SK-N-SH (cell line): ENCODE measurements at regions of chr4 and their contacts with region 1.

Region 1: GRCh38 chr4:1512738-1513660 is 106.8 kb upstream of the NKX1-1 start:
- DNase-seq: peak; percentile 87
- H3K4me3 ChIP-seq: no peak overlapping the region; a peak in 1 of 4 replicates
- H3K27ac ChIP-seq: no peak overlapping the region
- H3K4me1 ChIP-seq: no peaks in the 10 kb centered on the region
- H3K27me3 ChIP-seq: peaks cover 47% of the 10 kb centered on the region
- CTCF ChIP-seq: peak; percentile 56
- EP300 ChIP-seq: no peak
- RAD21 ChIP-seq: peak; percentile 37; the same call in 1 of the 2 replicates

Region 2: GRCh38 chr4:1351854-1352633 is 161.0 kb before region 1 on chr4:
- CTCF ChIA-PET with region 1: interaction called, 44 read pairs
- POLR2A ChIA-PET with region 1: no interaction called
- DNase-seq: peak; percentile 91
- H3K4me3 ChIP-seq: peak overlapping the region in 1 of 2 experiments; percentile 17; a peak in 1 of 4 replicates
- H3K27ac ChIP-seq: no peak overlapping the region
- H3K4me1 ChIP-seq: peaks cover 0 to 14% of the 10 kb centered on the region in 2 experiments; a peak in 1 of 4 replicates
- H3K27me3 ChIP-seq: no peaks in the 10 kb centered on the region
- CTCF ChIP-seq: peak; percentile 91
- EP300 ChIP-seq: no peak
- RAD21 ChIP-seq: peak; percentile 70

Region 3: GRCh38 chr4:1402516-1403091 is 110.4 kb before region 1 on chr4:
- CTCF ChIA-PET with region 1: interaction called, 11 read pairs
- POLR2A ChIA-PET with region 1: no interaction called
- DNase-seq: peak; percentile 52
- H3K4me3 ChIP-seq: no peak overlapping the region
- H3K27ac ChIP-seq: no peak overlapping the region
- H3K4me1 ChIP-seq: no peaks in the 10 kb centered on the region
- H3K27me3 ChIP-seq: peaks cover 50% of the 10 kb centered on the region
- CTCF ChIP-seq: no peak
- EP300 ChIP-seq: no peak
- RAD21 ChIP-seq: no peak

Region 4: DNA sequence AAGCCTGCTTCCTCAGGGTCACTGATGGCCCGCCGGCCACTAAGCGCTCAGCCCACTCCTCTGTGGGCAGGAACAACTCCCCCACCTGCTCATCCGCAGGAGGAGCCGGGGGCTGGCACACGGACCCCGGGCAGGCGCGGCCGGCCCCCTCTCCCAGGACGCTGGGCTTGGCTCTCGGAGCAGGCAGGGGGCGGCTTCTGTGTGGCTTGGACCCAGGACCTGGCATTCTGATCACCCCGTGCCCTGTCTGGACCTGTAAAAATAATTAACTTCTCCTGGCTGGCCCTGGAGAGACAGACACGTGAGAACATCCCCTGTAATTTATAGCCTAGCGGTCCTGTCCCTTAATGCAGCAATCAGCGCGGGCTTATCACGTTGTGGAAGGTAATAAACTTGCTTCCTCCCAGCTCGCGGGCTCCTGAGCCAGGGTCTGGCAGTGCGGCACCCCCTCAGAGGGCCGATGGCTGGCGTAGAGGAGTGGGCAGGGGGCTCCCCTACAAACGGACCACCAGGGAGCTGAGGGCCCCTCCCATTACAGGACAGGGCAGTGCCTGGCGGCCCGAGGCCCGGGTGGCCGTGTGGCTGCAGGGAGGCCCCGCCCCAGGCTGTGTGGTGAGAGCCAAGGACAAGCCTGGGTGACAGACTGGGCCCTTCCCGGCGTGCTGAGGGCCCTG is 22.2 kb before region 1 on chr4:
- CTCF ChIA-PET with region 1: interaction called, 21 read pairs
- POLR2A ChIA-PET with region 1: no interaction called
- DNase-seq: peak; percentile 69
- H3K4me3 ChIP-seq: no peak overlapping the region; a peak in 1 of 4 replicates
- H3K27ac ChIP-seq: no peak overlapping the region
- H3K4me1 ChIP-seq: peaks cover 0 to 7% of the 10 kb centered on the region in 2 experiments; a peak in 1 of 4 replicates
- H3K27me3 ChIP-seq: peaks cover 61% of the 10 kb centered on the region
- CTCF ChIP-seq: no peak
- EP300 ChIP-seq: no peak
- RAD21 ChIP-seq: no peak

Region 5: DNA sequence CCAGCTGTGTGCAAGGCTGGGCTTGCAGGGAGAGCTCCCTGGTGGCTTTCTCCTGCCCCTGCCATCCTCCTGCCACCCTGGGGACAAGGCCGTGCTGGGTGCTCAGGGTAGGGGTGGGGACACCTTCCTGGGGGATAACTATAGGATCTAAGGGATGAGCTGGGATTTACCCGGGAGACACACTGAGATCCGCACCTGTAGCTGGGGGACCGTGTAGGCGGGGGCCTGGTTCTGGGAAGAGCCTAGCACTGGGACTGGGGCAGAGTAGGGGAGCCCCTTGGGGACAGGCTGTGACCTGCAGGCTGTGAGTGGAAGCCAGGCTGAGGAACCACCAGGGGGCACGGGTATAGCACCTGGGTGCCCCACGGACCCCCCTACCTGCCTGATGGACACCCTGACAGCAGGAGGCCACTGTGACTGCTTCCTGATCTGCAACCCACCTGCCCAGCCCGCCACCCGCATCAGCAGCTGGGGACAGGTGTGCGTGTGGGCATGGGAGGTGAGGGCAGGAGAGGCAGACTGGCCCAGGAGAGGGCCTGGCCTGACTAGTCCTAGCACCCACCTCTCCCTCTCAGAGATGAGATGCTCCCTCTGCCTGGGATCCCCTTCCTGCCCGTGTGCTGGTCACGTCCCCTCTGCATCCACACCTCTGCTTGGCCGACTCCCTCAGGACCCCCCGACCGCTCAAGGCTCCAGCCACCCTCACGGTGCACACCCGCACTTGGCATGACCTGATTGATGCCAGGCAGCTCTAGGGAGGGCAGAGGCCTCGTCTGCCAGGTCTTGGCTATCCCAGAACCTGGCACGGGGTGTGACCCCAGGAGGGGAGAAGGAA is 12.7 kb before region 1 on chr4:
- CTCF ChIA-PET with region 1: interaction called, 12 read pairs
- POLR2A ChIA-PET with region 1: no interaction called
- DNase-seq: peak; percentile 4
- H3K4me3 ChIP-seq: no peak overlapping the region
- H3K27ac ChIP-seq: no peak overlapping the region
- H3K4me1 ChIP-seq: no peaks in the 10 kb centered on the region
- H3K27me3 ChIP-seq: peaks cover 25% of the 10 kb centered on the region; the same call in 1 of the 2 replicates
- CTCF ChIP-seq: no peak
- EP300 ChIP-seq: no peak
- RAD21 ChIP-seq: no peak

Region 6: DNA sequence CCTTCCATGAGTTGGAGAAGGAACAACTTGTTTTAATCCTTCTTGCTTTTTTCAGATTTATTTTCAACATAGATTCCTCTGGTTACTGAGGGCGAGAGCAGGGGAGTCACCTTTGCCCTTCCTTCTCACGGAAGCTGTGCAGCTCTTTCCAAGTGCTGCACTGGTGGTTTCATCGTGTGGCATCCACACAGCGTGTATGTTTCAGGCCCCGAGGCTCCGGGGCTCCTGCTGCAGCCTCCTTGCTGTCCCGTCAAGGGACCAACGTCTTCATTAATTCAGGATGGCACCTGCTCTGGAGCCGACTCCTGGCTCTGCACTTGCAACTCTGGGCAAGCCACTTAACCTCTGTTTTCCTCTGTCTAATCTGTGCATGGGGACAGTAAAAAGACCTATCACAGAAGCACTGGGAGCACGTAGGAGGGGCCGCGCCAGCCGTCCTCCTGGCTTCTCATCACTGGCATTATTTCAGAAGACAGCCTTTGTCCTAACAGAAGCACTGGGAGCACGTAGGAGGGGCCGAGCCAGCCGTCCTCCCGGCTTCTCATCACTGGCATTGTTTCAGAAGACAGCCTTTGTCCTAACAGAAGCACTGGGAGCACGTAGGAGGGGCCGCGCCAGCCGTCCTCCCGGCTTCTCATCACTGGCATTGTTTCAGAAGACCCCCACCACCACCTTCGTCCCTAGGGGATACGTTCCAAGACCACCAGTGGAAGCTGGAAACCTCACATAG is 11.1 kb after region 1 on chr4:
- CTCF ChIA-PET with region 1: interaction called, 14 read pairs
- POLR2A ChIA-PET with region 1: interaction called, 3 read pairs
- DNase-seq: no peak
- H3K4me3 ChIP-seq: no peak overlapping the region
- H3K27ac ChIP-seq: no peak overlapping the region
- H3K4me1 ChIP-seq: no peaks in the 10 kb centered on the region; a peak in 1 of 4 replicates
- H3K27me3 ChIP-seq: peaks cover 77% of the 10 kb centered on the region
- CTCF ChIP-seq: no peak
- EP300 ChIP-seq: no peak
- RAD21 ChIP-seq: no peak

Region 7: DNA sequence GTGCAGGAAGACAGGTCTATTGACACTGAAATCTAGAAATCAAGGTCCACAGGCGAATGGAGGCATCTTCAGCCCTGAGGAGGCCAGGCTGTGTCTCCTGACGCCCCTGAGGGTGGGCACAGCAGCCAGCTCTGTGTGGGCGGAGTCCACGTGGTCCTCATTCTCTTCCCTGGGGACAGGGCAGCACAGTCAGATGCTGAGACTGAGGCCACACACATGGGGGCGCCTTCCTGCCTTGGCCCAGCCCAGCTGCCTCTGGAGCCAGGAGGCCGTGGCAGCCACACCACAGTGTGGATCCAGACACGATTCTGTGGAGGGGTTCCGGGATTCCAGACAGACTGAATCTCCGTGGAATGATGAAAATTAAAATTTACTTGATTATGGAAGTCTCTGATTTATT is 300.9 kb after region 1 on chr4:
- CTCF ChIA-PET with region 1: no interaction called
- POLR2A ChIA-PET with region 1: no interaction called
- DNase-seq: no peak
- H3K4me3 ChIP-seq: no peak overlapping the region
- H3K27ac ChIP-seq: no peak overlapping the region
- H3K4me1 ChIP-seq: peaks cover 0 to 3% of the 10 kb centered on the region in 2 experiments; a peak in 1 of 4 replicates
- H3K27me3 ChIP-seq: no peaks in the 10 kb centered on the region
- CTCF ChIP-seq: no peak; the same call in 1 of the 2 replicates
- EP300 ChIP-seq: no peak
- RAD21 ChIP-seq: peak; percentile 21; the same call in 1 of the 2 replicates